ENCODE measurements at regions of chr12 and their contacts with region 1.

Region 1: GRCh38 chr12:11702959-11703358 is 53.5 kb downstream of the ETV6 start:
- DNase-seq: no peak
- H3K4me3 Mint-ChIP-seq: peak overlapping the region; percentile 8
- H3K27ac Mint-ChIP-seq: peak overlapping the region; percentile 78
- H3K4me1 Mint-ChIP-seq: peaks cover 60% of the 10 kb centered on the region
- H3K27me3 Mint-ChIP-seq: no peaks in the 10 kb centered on the region

Region 2: GRCh38 chr12:11568762-11569478 is 134.0 kb before region 1 on chr12:
- intact Hi-C with region 1: loop called (anchors 5 kb)
- DNase-seq: no peak
- H3K4me3 Mint-ChIP-seq: no peak overlapping the region
- H3K27ac Mint-ChIP-seq: no peak overlapping the region
- H3K4me1 Mint-ChIP-seq: no peaks in the 10 kb centered on the region
- H3K27me3 Mint-ChIP-seq: peaks cover 10% of the 10 kb centered on the region

Region 3: GRCh38 chr12:11661491-11662089 is 41.4 kb before region 1 on chr12:
- intact Hi-C with region 1: loop called (anchors 2 kb)
- DNase-seq: no peak
- H3K4me3 Mint-ChIP-seq: no peak overlapping the region
- H3K27ac Mint-ChIP-seq: peak overlapping the region; percentile 46
- H3K4me1 Mint-ChIP-seq: peaks cover 87% of the 10 kb centered on the region
- H3K27me3 Mint-ChIP-seq: no peaks in the 10 kb centered on the region

Region 4: DNA sequence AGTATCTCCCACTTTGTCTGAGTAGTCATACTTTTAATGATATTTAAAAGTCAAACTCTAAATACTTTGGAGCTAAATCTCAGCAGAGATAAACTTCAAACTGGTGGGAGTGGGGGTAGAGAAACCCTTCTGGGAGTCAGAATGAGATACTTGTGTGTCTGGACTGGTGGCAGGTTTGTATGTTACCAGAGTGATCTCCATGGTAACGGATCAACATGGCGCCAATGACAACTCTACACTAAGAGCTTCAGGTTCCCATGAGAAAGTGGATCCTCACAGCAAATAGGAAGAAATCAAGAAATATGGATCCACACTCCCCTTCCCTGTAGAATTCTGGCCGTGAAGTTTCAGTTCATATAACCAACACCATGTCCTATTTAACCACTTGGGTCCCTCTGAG is 68.4 kb after region 1 on chr12:
- intact Hi-C with region 1: loop called (anchors 1 kb)
- DNase-seq: no peak
- H3K4me3 Mint-ChIP-seq: no peak overlapping the region
- H3K27ac Mint-ChIP-seq: peak overlapping the region; percentile 98
- H3K4me1 Mint-ChIP-seq: peaks cover 96% of the 10 kb centered on the region
- H3K27me3 Mint-ChIP-seq: no peaks in the 10 kb centered on the region

Measured in activated T-helper 1 cell treated with anti-CD3 and anti-CD28 coated beads, Interleukin-12 subunit alpha, Interleukin-12 subunit beta, Interleukin-2, Interleukin-4 antibody, amounts not matched to agents 30 ng/mL and 10 ng/mL and 1 ng/mL, durations not matched to agents 14 hours and 24 hours and 36 hours (primary cell).